ENCODE measurements at regions of chr7 and their contacts with region 1.

Region 1: GRCh38 chr7:92134271-92135051 is at the start of gene CYP51A1:
- DNase-seq: peak; percentile 89 to 97 (median 95)
- H3K4me3 ChIP-seq: peak within 1 kb of the TSS; percentile 89
- H3K4me3 Mint-ChIP-seq: peak within 1 kb of the TSS; percentile 94 to 100 (median 98)
- H3K27ac ChIP-seq: peak within 1 kb of the TSS; percentile 95
- H3K27ac Mint-ChIP-seq: peak within 1 kb of the TSS; percentile 96 to 100 (median 99)
- H3K4me1 ChIP-seq: peaks cover 7% of the 10 kb centered on the region
- H3K4me1 Mint-ChIP-seq: peaks cover 31 to 39% (median 37%) of the 10 kb centered on the region in 3 donors
- H3K27me3 ChIP-seq: no peaks in the 10 kb centered on the region
- H3K27me3 Mint-ChIP-seq: peaks cover 0 to 11% of the 10 kb centered on the region in 2 donors
- total RNA-seq, gene CYP51A1: 44.5 TPM

Region 2: DNA sequence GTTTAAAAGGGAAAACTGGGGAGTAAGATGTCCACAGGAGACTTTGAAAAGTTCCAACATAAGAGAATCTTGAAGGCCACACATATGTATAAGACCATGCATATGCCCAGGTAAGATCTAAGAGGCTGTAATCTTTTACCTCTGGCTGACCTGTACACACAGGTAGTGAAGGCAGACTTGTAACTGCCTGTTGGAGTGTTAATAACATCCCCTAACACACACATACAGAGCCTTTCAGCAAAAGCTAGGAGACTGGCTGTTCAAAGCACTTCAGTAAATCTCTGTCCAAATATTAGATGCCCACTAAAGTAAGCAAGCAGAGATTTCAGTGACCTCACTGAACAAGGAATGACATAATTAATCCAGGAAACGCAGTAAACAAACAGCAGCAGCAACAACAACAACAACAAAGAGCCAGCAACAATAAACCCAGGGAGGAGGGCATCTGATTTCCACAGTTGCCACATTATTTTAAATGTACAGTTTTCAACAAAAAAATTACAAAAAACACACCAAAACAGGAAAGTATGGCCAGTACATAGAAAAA is 15.2 kb before region 1 on chr7:
- CTCF ChIA-PET with region 1: no interaction called
- POLR2A ChIA-PET with region 1: no interaction called
- DNase-seq: no peak
- H3K4me3 ChIP-seq: no peak overlapping the region
- H3K4me3 Mint-ChIP-seq: no peak overlapping the region
- H3K27ac ChIP-seq: no peak overlapping the region
- H3K27ac Mint-ChIP-seq: no peak overlapping the region
- H3K4me1 ChIP-seq: no peaks in the 10 kb centered on the region
- H3K4me1 Mint-ChIP-seq: peaks cover 2 to 17% (median 2%) of the 10 kb centered on the region in 3 donors
- H3K27me3 ChIP-seq: no peaks in the 10 kb centered on the region
- H3K27me3 Mint-ChIP-seq: no peaks in the 10 kb centered on the region

Region 3: GRCh38 chr7:92245487-92246362 is 111.3 kb after region 1 on chr7 and contains the starts of genes ANKIB1 and KRIT1:
- CTCF ChIA-PET with region 1: no interaction called
- POLR2A ChIA-PET with region 1: interaction called, 10 read pairs
- DNase-seq: peak; percentile 82 to 92 (median 86)
- H3K4me3 ChIP-seq: peak within 1 kb of the TSS; percentile 75
- H3K4me3 Mint-ChIP-seq: peak within 1 kb of the TSS; percentile 94 to 100 (median 98)
- H3K27ac ChIP-seq: peak within 1 kb of the TSS; percentile 86
- H3K27ac Mint-ChIP-seq: peak within 1 kb of the TSS; percentile 98 to 100 (median 100)
- H3K4me1 ChIP-seq: peaks cover 32% of the 10 kb centered on the region
- H3K4me1 Mint-ChIP-seq: peaks cover 52 to 59% (median 56%) of the 10 kb centered on the region in 3 donors
- H3K27me3 ChIP-seq: no peaks in the 10 kb centered on the region
- H3K27me3 Mint-ChIP-seq: no peaks in the 10 kb centered on the region
- total RNA-seq, gene ANKIB1: 42.7 to 44.7 TPM
- total RNA-seq, gene KRIT1: 44.6 to 48.3 TPM